Panc1 (cell line): ENCODE measurements at regions of chr6 and their contacts with region 1.

Region 1: GRCh38 chr6:8888468-8888867 is 453.1 kb upstream of the SLC35B3 start:
- DNase-seq: no peak
- ATAC-seq: peak; percentile 88
- H3K4me3 ChIP-seq: no peak overlapping the region
- H3K27ac ChIP-seq: no peak overlapping the region
- H3K4me1 ChIP-seq: no peaks in the 10 kb centered on the region
- H3K27me3 ChIP-seq: no peaks in the 10 kb centered on the region
- CTCF ChIP-seq: peak; percentile 75

Region 2: DNA sequence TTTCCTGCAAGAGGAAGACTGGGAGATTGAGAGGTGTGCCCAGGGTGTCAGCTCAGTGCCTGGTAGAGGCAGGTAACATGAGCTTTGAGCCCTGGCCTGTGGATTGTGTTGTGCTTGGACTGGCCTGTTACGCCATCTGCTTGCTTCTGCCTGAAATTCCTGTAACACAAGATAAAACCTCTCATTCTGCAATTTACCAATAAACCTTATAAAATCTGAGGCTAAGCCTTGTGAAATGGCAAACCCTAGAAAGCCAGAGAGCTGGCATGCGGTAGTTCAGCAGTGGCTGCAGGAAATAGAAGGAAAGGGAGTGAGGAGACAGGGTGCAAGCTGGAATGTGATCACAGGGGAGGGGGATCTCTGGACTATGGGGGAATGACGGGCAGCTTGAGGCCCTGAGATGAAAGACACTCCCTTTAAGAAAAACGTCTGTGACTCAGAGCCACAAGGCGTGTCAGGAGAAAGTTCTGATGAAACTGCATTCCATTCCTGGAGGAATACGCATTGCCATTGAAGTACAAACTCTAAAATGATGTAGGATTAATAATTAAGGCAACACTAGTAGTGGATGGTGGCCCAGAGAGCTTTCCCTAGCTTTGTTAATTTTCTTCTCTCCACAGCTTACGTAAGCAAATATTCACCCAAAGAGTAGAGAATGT is 1552.7 kb after region 1 on chr6:
- CTCF ChIA-PET with region 1: no interaction called
- POLR2A ChIA-PET with region 1: interaction called, 10 read pairs
- in situ Hi-C with region 1: no loop called
- intact Hi-C with region 1: no loop called
- DNase-seq: no peak
- ATAC-seq: peak; percentile 73; the same call in 1 of the 2 replicates
- H3K4me3 ChIP-seq: no peak overlapping the region
- H3K27ac ChIP-seq: no peak overlapping the region
- H3K4me1 ChIP-seq: no peaks in the 10 kb centered on the region
- H3K27me3 ChIP-seq: no peaks in the 10 kb centered on the region
- CTCF ChIP-seq: no peak